CD8-positive, alpha-beta T cell (primary cell): ENCODE measurements at regions of chr22 and their contacts with region 1.

Region 1: GRCh38 chr22:20079745-20080444 is at the start of gene DGCR8:
- DNase-seq: peak; percentile 45 to 91 (median 66)
- ATAC-seq: peak; percentile 91
- H3K4me3 ChIP-seq: peak within 1 kb of the TSS; percentile 73 to 99
- H3K4me3 Mint-ChIP-seq: peak within 1 kb of the TSS; percentile 97
- H3K27ac ChIP-seq: peak within 1 kb of the TSS; percentile 62 to 64
- H3K27ac Mint-ChIP-seq: peak within 1 kb of the TSS; percentile 96
- H3K4me1 ChIP-seq: peaks cover 18% of the 10 kb centered on the region
- H3K4me1 Mint-ChIP-seq: peaks cover 43% of the 10 kb centered on the region
- H3K27me3 ChIP-seq: no peaks in the 10 kb centered on the region
- H3K27me3 Mint-ChIP-seq: no peaks in the 10 kb centered on the region
- CTCF ChIP-seq: no peak
- total RNA-seq, gene DGCR8: 16.9 to 22.1 TPM

Region 2: DNA sequence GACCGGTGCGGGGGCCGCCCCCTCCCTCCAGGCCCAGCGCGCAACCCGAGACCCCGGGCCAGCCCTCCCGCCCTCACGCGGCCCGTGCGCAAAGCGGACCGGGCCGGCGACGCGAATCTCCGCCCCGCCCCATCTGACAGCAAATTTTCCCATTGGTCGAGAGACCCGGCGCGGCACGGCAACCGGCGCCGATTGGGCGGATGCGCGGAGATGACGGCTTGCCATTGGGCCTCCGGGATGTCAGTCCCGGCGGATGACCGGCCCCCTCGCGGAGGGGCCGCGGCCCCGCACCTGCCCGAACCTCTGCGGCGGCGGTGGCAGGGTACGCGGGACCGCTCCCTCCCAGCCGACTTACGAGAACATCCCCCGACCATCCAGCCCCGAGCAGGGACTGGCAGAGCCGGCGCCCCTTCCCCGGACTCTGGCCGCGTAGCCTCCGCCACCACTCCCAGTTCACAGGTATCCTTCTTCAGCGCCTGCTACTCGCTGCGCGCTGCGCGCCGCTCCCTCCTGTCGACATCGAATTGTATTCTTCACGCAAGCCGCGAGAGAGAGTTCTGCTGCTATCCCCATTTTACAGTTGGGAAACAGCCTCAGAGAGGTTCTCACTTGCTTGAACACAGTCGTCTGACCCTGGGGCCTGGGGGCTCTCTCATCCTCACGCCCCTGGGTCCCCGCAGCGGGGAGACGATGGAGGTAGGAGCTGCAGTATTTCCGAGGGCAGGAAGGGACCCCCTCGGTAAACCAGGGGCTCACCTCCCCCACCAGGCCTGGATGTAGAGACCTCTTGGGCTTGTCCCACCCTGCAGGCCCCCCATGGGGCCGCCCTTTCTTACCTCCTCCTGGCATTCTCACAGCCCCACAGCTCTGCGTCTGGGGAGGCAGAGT is 62.9 kb before region 1 on chr22 and contains the start of gene ARVCF:
- CTCF ChIA-PET with region 1: no interaction called
- POLR2A ChIA-PET with region 1: no interaction called
- intact Hi-C with region 1: loop called (anchors 1 kb)
- DNase-seq: peak; percentile 85 to 96 (median 92)
- ATAC-seq: peak; percentile 66
- H3K4me3 ChIP-seq: peak within 1 kb of the TSS; percentile 79 to 81
- H3K4me3 Mint-ChIP-seq: peak within 1 kb of the TSS; percentile 91
- H3K27ac ChIP-seq: no peak within 1 kb of the TSS
- H3K27ac Mint-ChIP-seq: peak within 1 kb of the TSS; percentile 14
- H3K4me1 ChIP-seq: peaks cover 19% of the 10 kb centered on the region
- H3K4me1 Mint-ChIP-seq: peaks cover 25% of the 10 kb centered on the region
- H3K27me3 ChIP-seq: no peaks in the 10 kb centered on the region
- H3K27me3 Mint-ChIP-seq: no peaks in the 10 kb centered on the region
- CTCF ChIP-seq: no peak
- total RNA-seq, gene ARVCF: 1.1 to 2.3 TPM

Region 3: GRCh38 chr22:20090348-20091240 is 10.7 kb after region 1 on chr22:
- CTCF ChIA-PET with region 1: interaction called, 4 read pairs
- POLR2A ChIA-PET with region 1: no interaction called
- intact Hi-C with region 1: loop called in 1 of 2 experiments (anchors 1 kb)
- DNase-seq: peak in 1 of 9 experiments; percentile 56
- ATAC-seq: peak; percentile 27
- H3K4me3 ChIP-seq: no peak overlapping the region
- H3K4me3 Mint-ChIP-seq: peak overlapping the region; percentile 66
- H3K27ac ChIP-seq: peak overlapping the region; percentile 2 to 39
- H3K27ac Mint-ChIP-seq: peak overlapping the region; percentile 91
- H3K4me1 ChIP-seq: peaks cover 50% of the 10 kb centered on the region
- H3K4me1 Mint-ChIP-seq: peaks cover 68% of the 10 kb centered on the region
- H3K27me3 ChIP-seq: no peaks in the 10 kb centered on the region
- H3K27me3 Mint-ChIP-seq: no peaks in the 10 kb centered on the region
- CTCF ChIP-seq: no peak

Region 4: GRCh38 chr22:20102203-20102780 is 22.4 kb after region 1 on chr22:
- CTCF ChIA-PET with region 1: no interaction called
- POLR2A ChIA-PET with region 1: interaction called, 7 read pairs
- intact Hi-C with region 1: loop called (anchors 1 kb)
- DNase-seq: no peak
- ATAC-seq: no peak
- H3K4me3 ChIP-seq: no peak overlapping the region
- H3K4me3 Mint-ChIP-seq: no peak overlapping the region
- H3K27ac ChIP-seq: peak overlapping the region in 1 of 2 experiments; percentile 17
- H3K27ac Mint-ChIP-seq: peak overlapping the region; percentile 70
- H3K4me1 ChIP-seq: peaks cover 37% of the 10 kb centered on the region
- H3K4me1 Mint-ChIP-seq: peaks cover 48% of the 10 kb centered on the region
- H3K27me3 ChIP-seq: no peaks in the 10 kb centered on the region
- H3K27me3 Mint-ChIP-seq: no peaks in the 10 kb centered on the region
- CTCF ChIP-seq: no peak

Region 5: DNA sequence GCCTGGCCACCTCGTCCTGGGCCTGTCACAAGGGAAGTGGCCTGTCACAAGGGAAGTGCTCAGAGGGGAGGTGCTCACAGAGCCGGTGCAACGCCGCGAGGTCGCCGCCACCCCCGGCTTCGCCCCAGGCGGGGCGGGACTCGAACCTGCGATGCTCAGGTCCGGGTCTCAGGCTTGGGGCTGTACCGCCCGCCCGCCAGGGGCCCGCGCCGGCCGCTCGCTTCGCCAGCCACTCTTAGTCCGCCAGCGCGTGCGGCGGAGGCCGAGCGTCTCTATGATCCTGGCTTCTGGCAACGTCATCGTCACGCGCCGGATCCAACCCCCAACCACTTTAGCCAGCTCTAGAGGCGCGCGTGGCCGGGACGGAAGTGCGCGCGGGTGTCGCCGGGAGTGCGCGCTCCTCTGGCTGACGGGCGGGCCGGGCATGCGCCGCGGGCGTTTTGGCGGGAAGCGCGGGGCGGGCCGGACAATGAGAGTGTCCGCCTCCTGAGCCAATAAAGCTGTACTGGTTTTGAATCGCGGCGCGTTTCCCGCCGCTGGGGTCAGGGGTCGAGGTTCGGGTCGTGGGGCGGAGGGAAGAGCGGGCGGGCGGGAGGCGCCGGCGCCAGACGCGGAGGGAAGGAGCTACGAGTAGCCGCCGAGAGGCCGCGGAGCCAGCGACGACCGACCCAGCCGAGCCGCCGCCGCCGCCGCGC is 37.2 kb after region 1 on chr22 and contains the start of gene TRMT2A:
- CTCF ChIA-PET with region 1: no interaction called
- POLR2A ChIA-PET with region 1: interaction called, 3 read pairs
- intact Hi-C with region 1: loop called (anchors 1 kb)
- DNase-seq: peak; percentile 91 to 99 (median 96)
- ATAC-seq: peak; percentile 80
- H3K4me3 ChIP-seq: peak within 1 kb of the TSS; percentile 80 to 96
- H3K4me3 Mint-ChIP-seq: peak within 1 kb of the TSS; percentile 90
- H3K27ac ChIP-seq: peak within 1 kb of the TSS; percentile 81 to 94
- H3K27ac Mint-ChIP-seq: peak within 1 kb of the TSS; percentile 93
- H3K4me1 ChIP-seq: peaks cover 38% of the 10 kb centered on the region
- H3K4me1 Mint-ChIP-seq: peaks cover 43% of the 10 kb centered on the region
- H3K27me3 ChIP-seq: no peaks in the 10 kb centered on the region
- H3K27me3 Mint-ChIP-seq: no peaks in the 10 kb centered on the region
- CTCF ChIP-seq: no peak
- total RNA-seq, gene TRMT2A: 57.8 to 62.8 TPM